Activated CD4-positive, alpha-beta memory T cell treated with anti-CD3 and anti-CD28 coated beads, Interleukin-2, amount 10 ng/mL, durations not matched to agents 7 days and 5 days (primary cell): ENCODE measurements at regions of chr3 and their contacts with region 1.

Region 1: DNA sequence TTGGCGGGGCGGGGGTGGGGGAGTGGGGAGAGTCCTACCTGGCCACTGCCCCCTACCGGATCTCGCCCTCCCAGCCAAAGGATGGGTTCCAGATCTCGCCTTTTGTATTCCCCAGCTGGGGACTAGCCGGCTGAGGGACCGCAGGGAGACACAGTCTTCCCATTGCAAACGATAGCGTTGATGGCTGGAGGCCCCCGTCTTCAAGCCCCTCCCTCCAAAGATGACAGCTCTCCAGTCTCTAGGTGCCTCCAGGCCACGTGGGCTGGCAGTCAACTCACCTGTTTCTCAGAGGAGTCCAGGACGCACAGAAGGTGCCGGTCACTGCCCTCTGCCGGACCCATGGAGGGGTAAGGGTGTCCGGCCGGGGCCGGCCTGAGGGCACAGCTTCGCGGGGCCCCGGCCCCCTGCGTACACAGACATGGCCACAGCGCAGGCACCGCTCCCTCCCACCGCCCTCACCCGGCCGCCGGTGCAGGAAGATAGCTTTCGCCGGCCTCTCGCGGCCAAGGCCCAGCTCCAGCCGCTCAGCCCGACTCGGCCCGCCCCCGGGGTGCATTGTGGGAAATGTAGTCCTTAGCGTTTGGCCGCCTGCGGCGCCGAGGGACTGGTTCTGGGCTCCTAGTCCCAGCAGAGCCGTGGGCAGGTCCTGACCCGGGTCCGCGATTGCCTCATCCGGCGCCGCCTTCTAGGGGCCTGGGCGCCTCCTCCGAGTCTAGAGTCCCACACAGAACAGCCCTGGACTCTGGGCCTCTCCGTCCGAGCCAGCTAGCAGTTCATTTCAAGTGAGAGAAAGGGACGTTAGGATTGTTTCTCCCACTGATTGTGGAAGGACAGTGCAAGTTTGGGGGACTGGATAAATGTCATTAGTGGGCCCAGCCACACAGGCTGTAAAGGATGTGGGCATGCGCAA is at the start of gene MON1A:
- DNase-seq: peak; percentile 90
- H3K4me3 Mint-ChIP-seq: peak within 1 kb of the TSS; percentile 77
- H3K27ac Mint-ChIP-seq: peak within 1 kb of the TSS; percentile 69
- H3K4me1 Mint-ChIP-seq: peaks cover 24% of the 10 kb centered on the region
- H3K27me3 Mint-ChIP-seq: no peaks in the 10 kb centered on the region
- total RNA-seq, gene MON1A: 9.7 to 10.3 TPM

Region 2: DNA sequence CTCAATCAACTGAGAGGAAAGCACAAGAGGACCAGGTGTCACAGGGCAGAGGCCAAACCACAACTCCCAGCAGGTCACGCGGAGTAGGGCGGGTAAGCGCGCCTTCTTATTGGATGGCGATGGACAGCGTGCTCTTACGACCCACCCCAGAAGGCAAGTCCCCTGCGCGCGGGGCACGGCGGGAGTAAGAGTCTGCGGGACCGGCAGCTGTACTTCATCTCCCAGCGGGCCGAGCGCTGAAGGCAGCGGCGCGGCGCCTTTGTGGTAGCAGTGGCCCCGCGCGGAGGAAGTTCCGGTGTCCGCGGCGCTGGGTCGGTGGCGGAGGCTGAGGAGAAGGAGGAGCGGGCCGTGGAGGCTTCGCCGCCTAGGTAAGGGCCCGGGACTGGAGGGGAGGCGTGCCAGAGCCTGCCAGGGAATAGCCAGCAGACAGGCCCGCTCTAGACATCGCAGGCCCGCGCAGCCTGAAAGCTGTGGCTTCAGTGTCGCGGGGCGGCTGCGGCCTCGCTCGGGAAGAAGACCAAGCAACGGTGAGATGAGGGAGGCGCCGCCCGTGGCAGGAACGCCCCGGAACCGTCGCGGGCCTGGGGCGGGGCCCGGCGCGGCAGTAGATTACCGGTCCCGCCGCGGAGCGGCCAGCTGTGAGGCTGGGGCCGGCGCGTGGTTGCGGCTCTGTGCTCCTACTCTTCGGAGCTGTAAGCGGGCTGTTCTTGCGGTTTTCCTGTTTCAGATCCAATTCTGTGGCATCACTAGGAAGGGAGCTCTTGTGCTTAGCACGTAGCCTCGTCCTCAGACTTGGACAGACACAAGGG is 10.5 kb after region 1 on chr3 and contains the start of gene RBM6:
- CTCF ChIA-PET with region 1: interaction called, 18 read pairs
- POLR2A ChIA-PET with region 1: interaction called, 40 read pairs
- DNase-seq: peak; percentile 97
- H3K4me3 Mint-ChIP-seq: peak within 1 kb of the TSS; percentile 97
- H3K27ac Mint-ChIP-seq: peak within 1 kb of the TSS; percentile 97
- H3K4me1 Mint-ChIP-seq: peaks cover 31% of the 10 kb centered on the region
- H3K27me3 Mint-ChIP-seq: no peaks in the 10 kb centered on the region
- total RNA-seq, gene RBM6: 88.0 to 90.3 TPM

Region 3: GRCh38 chr3:49966230-49966942 is 36.8 kb after region 1 on chr3:
- CTCF ChIA-PET with region 1: no interaction called
- POLR2A ChIA-PET with region 1: no interaction called
- DNase-seq: no peak
- H3K4me3 Mint-ChIP-seq: no peak overlapping the region
- H3K27ac Mint-ChIP-seq: no peak overlapping the region
- H3K4me1 Mint-ChIP-seq: peaks cover 2% of the 10 kb centered on the region
- H3K27me3 Mint-ChIP-seq: no peaks in the 10 kb centered on the region

Region 4: GRCh38 chr3:49998326-49998725 is 68.7 kb after region 1 on chr3:
- CTCF ChIA-PET with region 1: no interaction called
- POLR2A ChIA-PET with region 1: no interaction called
- DNase-seq: no peak
- H3K4me3 Mint-ChIP-seq: no peak overlapping the region
- H3K27ac Mint-ChIP-seq: no peak overlapping the region
- H3K4me1 Mint-ChIP-seq: peaks cover 15% of the 10 kb centered on the region
- H3K27me3 Mint-ChIP-seq: no peaks in the 10 kb centered on the region

Region 5: DNA sequence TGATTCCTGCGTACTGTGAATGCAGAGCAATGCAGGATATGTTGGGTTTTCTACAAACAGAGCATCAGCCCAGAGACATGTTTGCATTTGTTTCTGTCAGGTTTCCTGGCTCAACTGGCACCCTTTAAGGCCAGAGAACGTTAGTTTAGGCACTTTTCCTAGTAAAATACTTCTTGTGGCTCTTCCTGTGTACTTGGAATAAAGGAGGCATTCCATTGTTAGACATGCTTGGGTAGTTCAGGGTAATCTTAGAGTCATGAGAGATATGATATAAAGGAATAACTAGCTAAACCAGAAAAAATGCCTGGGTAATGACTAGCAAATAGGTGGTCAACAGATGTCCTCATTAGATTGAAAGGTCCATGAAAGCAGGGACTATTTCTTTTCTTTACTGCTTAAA is 98.8 kb after region 1 on chr3:
- CTCF ChIA-PET with region 1: no interaction called
- POLR2A ChIA-PET with region 1: no interaction called
- DNase-seq: no peak
- H3K4me3 Mint-ChIP-seq: no peak overlapping the region
- H3K27ac Mint-ChIP-seq: no peak overlapping the region
- H3K4me1 Mint-ChIP-seq: no peaks in the 10 kb centered on the region
- H3K27me3 Mint-ChIP-seq: no peaks in the 10 kb centered on the region

Region 6: DNA sequence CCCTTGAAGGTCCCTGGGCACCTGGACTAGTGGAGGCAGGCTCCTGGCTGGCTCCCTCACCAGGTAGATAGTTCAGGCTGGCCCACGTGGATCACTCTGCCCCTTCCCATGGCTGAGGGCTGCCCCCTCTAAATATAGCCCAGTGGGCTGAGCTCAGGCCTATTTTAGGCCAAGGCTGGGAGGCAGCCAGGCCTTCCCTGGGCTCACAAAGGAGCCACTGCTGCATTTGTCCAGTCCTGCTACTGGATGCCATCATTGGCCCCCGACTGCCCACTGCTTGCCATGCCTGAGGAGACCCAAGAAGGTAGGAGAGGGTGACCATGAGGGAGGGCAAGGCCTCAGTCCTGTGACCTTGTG is 349.3 kb after region 1 on chr3 and contains the start of gene LSMEM2:
- CTCF ChIA-PET with region 1: no interaction called
- POLR2A ChIA-PET with region 1: no interaction called
- DNase-seq: no peak
- H3K4me3 Mint-ChIP-seq: no peak within 1 kb of the TSS
- H3K27ac Mint-ChIP-seq: no peak within 1 kb of the TSS
- H3K4me1 Mint-ChIP-seq: peaks cover 19% of the 10 kb centered on the region
- H3K27me3 Mint-ChIP-seq: peaks cover 39% of the 10 kb centered on the region
- total RNA-seq, gene LSMEM2: not detected